Thyroid gland (tissue), 4 donors: ENCODE measurements at regions of chr2 and their contacts with region 1.

Region 1: GRCh38 chr2:73176881-73177644 is 25.3 kb upstream of the NOTO start:
- DNase-seq: peak; percentile 91 to 92
- H3K4me3 ChIP-seq: peak overlapping the region in 1 of 3 donors; percentile 48
- H3K27ac ChIP-seq: peak overlapping the region in 2 of 3 donors; percentile 72 to 76
- H3K4me1 ChIP-seq: peaks cover 17 to 27% of the 10 kb centered on the region in 2 donors
- H3K27me3 ChIP-seq: no peaks in the 10 kb centered on the region
- CTCF ChIP-seq: peak; percentile 90 to 99 (median 98)
- POLR2A ChIP-seq: peak in 1 of 2 donors; percentile 22

Region 2: GRCh38 chr2:72892506-72893173 is 284.4 kb before region 1 on chr2:
- intact Hi-C with region 1: loop called (anchors 10 kb)
- DNase-seq: peak; percentile 66 to 73
- H3K4me3 ChIP-seq: no peak overlapping the region
- H3K27ac ChIP-seq: no peak overlapping the region
- H3K4me1 ChIP-seq: peaks cover 13 to 19% of the 10 kb centered on the region in 2 donors
- H3K27me3 ChIP-seq: no peaks in the 10 kb centered on the region
- CTCF ChIP-seq: peak; percentile 19 to 78 (median 62)
- POLR2A ChIP-seq: no peak

Region 3: GRCh38 chr2:73080711-73081131 is 96.3 kb before region 1 on chr2:
- intact Hi-C with region 1: loop called (anchors 5 kb)
- DNase-seq: no peak
- H3K4me3 ChIP-seq: no peak overlapping the region
- H3K27ac ChIP-seq: no peak overlapping the region
- H3K4me1 ChIP-seq: no peaks in the 10 kb centered on the region
- H3K27me3 ChIP-seq: no peaks in the 10 kb centered on the region
- CTCF ChIP-seq: no peak
- POLR2A ChIP-seq: no peak

Region 4: GRCh38 chr2:73134471-73134870 is 42.6 kb before region 1 on chr2:
- intact Hi-C with region 1: no loop called
- DNase-seq: no peak
- H3K4me3 ChIP-seq: no peak overlapping the region
- H3K27ac ChIP-seq: no peak overlapping the region
- H3K4me1 ChIP-seq: no peaks in the 10 kb centered on the region
- H3K27me3 ChIP-seq: no peaks in the 10 kb centered on the region
- CTCF ChIP-seq: no peak
- POLR2A ChIP-seq: no peak

Region 5: GRCh38 chr2:73685770-73686438 is 508.8 kb after region 1 on chr2:
- intact Hi-C with region 1: no loop called
- DNase-seq: no peak
- H3K4me3 ChIP-seq: no peak overlapping the region
- H3K27ac ChIP-seq: no peak overlapping the region
- H3K4me1 ChIP-seq: no peaks in the 10 kb centered on the region
- H3K27me3 ChIP-seq: no peaks in the 10 kb centered on the region
- CTCF ChIP-seq: no peak
- POLR2A ChIP-seq: no peak